GM13976 (cell line): ENCODE measurements at regions of chr5 and their contacts with region 1.

Region 1: GRCh38 chr5:80318212-80318611 is 1.6 kb upstream of the SPZ1 start:
- DNase-seq: no peak
- CTCF ChIP-seq: no peak

Region 2: DNA sequence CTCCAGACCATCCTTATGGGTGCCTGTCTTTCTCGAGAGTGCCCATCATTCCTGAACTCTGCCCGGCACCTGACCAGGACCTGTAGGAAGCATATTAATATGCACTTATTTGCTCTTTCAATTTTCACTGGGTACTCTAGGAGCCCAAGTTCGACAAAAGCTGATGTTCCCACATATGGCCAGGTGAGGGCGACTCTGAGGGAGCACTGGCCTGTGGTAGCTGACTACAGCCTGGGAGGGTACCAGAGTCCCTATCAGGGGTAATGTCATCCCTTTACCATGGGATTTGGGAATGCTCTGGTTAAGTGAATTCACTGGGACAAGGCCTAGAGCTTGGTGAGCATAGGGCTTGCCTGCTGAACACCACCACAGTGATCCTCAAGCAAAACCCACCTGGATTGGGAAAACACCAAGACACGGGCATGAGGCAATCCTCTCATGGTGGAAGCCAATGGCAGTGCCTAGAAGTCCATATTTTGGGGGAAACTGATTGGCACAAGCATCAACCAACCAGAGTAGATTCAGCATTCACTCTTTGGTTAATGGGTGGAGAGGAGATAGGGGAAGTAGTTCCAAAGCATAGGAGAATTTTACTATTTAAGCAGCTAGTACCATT is 439.4 kb before region 1 on chr5:
- in situ Hi-C with region 1: loop called (anchors 25 kb)
- DNase-seq: peak; percentile 45
- CTCF ChIP-seq: peak; percentile 45

Region 3: DNA sequence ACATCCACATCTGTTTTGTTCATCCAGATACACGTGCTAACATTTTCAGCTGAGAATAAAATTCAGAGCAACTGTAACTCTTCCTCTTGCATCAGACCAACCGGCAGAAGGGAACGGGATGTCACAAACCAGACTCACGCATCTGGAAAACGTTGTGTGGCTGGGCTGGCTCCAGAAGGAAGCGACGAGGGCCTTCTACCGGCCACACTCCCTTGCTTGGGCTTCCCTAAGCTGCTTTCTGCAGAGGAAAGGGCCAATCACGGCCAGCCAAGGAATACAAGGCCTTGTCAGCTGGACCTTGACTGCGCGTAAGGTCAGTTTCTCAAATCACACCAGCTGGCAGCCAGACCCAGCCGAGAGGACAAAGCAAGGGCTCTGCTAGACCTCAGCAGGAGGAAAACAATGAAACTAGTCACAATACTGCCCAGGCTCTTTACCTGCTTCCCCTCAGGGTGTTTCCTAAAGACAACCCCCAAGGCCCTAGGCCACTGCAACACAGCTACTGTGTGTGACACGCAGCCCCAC is 177.0 kb before region 1 on chr5:
- in situ Hi-C with region 1: no loop called
- DNase-seq: no peak
- CTCF ChIP-seq: no peak

Region 4: DNA sequence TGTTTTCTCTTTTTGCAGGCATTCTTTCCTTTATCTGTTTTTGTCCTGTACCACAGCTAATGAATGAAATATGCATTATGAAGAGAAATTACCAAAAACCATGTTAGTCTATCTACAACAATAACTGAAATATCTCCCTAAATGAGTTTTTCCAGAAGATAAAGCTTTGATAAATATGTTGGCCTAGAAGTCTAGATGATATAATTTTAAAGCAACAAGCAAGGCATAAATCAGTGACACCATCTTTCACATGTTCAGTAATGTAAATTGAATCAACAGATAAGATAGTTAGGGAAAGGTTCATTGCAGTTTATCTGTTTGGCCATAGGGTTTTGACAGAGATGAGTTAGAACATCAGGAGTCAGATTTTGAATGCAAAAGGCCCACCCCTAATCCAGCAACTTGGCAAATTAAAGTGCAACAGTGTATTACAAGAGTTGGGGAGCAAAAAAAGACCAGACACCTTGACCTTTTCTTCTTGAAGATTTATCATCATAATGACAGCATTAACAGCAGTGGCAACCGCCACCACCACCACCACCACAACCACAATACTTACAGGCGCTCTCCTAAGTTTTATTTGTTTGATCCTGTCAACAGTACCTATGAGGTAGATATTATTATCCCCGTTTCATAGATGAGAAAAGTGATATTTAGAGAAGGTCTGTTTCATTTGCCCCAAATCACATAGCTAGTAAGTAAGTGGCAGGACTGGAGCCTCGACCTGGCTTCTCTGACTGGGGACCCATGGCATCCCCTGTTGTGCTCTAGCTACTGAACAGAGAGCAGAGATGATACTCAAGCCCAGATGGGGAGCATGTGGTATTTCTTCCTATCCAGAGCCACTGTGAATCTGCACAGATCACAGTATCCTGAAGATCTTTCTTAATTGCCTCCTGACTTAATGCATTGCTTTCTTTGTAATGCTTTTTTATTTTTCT is 459.4 kb after region 1 on chr5:
- in situ Hi-C with region 1: no loop called
- DNase-seq: no peak
- CTCF ChIP-seq: no peak